CD8-positive, alpha-beta T cell (primary cell): ENCODE measurements at regions of chr12 and their contacts with region 1.

Region 1: DNA sequence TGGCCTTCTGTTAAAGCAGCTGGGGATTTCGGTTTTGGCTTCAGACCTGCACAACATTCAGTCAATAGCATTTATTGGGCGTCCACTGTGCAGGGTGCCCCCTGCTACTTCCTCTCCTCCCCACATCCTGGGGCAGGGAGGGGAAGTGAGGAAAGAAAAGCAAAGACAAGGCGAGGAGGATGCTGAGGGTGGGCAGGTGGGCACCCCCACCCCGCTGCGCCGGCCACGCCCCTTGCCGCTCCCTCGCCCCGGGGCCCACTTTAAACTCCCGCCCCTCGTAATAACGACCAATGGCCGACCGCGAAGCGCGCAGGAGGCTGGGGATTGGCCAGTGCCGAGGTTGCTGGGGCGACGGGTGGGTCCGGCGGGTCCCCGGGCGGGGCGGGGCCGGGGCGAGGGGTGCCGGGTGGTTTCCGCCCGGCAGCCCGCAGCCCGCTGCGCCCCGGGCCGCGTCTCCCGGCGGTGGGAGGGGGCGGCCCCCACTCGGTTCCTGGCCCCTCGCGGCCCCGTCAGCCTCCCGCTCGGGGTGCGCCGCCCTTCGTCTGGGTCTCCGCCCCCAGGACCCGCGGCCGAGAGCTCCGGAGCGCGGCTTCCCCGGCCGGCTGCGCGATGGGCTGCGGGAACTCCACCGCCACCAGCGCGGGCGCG is at the start of gene C12orf75:
- DNase-seq: peak; percentile 52 to 93 (median 85)
- ATAC-seq: peak; percentile 80
- H3K4me3 ChIP-seq: peak within 1 kb of the TSS; percentile 62 to 70
- H3K4me3 Mint-ChIP-seq: peak within 1 kb of the TSS; percentile 90
- H3K27ac ChIP-seq: peak within 1 kb of the TSS; percentile 48 to 74
- H3K27ac Mint-ChIP-seq: peak within 1 kb of the TSS; percentile 87
- H3K4me1 ChIP-seq: peaks cover 26% of the 10 kb centered on the region
- H3K4me1 Mint-ChIP-seq: peaks cover 60% of the 10 kb centered on the region
- H3K27me3 ChIP-seq: no peaks in the 10 kb centered on the region
- H3K27me3 Mint-ChIP-seq: no peaks in the 10 kb centered on the region
- CTCF ChIP-seq: no peak
- total RNA-seq, gene C12orf75: 27.5 to 27.9 TPM

Region 2: GRCh38 chr12:105235732-105236476 is 94.5 kb before region 1 on chr12 and contains the start of gene APPL2:
- CTCF ChIA-PET with region 1: interaction called, 13 read pairs
- POLR2A ChIA-PET with region 1: interaction called, 18 read pairs
- intact Hi-C with region 1: loop called (anchors 2 kb)
- DNase-seq: peak; percentile 62 to 91 (median 82)
- ATAC-seq: peak; percentile 73
- H3K4me3 ChIP-seq: peak within 1 kb of the TSS; percentile 75 to 77
- H3K4me3 Mint-ChIP-seq: peak within 1 kb of the TSS; percentile 93
- H3K27ac ChIP-seq: peak within 1 kb of the TSS; percentile 79 to 87
- H3K27ac Mint-ChIP-seq: peak within 1 kb of the TSS; percentile 97
- H3K4me1 ChIP-seq: peaks cover 36% of the 10 kb centered on the region
- H3K4me1 Mint-ChIP-seq: peaks cover 51% of the 10 kb centered on the region
- H3K27me3 ChIP-seq: no peaks in the 10 kb centered on the region
- H3K27me3 Mint-ChIP-seq: no peaks in the 10 kb centered on the region
- CTCF ChIP-seq: no peak
- total RNA-seq, gene APPL2: 53.1 to 60.6 TPM